Brain microvascular endothelial cell (primary cell): ENCODE measurements at regions of chr10 and their contacts with region 1.

Region 1: DNA sequence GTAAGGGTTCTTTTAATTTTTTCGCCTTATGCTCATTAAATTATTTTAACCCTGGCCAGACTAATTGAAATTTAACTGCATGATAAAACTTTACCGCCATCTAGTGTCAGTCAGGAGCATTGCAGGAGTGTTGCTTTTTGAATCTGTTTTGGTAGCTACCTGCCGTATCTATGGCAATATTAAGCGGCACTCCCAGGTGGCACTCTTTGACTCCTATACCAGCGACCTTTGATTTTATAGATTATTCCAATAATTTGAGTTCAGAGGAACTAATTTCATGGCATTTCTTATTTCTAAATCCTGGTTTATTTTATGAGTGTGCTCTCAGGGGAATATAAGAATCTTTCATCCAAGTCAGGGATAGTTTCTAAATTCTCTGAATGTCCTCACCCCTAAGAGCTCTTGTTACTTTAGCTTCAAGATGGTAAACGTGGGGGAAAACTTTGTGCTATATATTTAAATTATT is 198.9 kb downstream of the REEP3 start:
- DNase-seq: peak; percentile 53
- H3K4me3 ChIP-seq: no peak overlapping the region
- H3K27ac ChIP-seq: no peak overlapping the region
- H3K27me3 ChIP-seq: no peaks in the 10 kb centered on the region
- CTCF ChIP-seq: peak; percentile 84

Region 2: GRCh38 chr10:63157845-63158624 is 562.1 kb before region 1 on chr10:
- in situ Hi-C with region 1: loop called (anchors 25 kb)
- DNase-seq: peak; percentile 35
- H3K4me3 ChIP-seq: no peak overlapping the region
- H3K27ac ChIP-seq: no peak overlapping the region
- H3K27me3 ChIP-seq: no peaks in the 10 kb centered on the region
- CTCF ChIP-seq: peak; percentile 76